Head of caudate nucleus (tissue), 42 donors: ENCODE measurements at regions of chr12 and their contacts with region 1.

Region 1: GRCh38 chr12:89542912-89543592 is 17.2 kb upstream of the POC1B start:
- DNase-seq: peak in 41 of 42 donors; percentile 27 to 89 (median 72)

Region 2: DNA sequence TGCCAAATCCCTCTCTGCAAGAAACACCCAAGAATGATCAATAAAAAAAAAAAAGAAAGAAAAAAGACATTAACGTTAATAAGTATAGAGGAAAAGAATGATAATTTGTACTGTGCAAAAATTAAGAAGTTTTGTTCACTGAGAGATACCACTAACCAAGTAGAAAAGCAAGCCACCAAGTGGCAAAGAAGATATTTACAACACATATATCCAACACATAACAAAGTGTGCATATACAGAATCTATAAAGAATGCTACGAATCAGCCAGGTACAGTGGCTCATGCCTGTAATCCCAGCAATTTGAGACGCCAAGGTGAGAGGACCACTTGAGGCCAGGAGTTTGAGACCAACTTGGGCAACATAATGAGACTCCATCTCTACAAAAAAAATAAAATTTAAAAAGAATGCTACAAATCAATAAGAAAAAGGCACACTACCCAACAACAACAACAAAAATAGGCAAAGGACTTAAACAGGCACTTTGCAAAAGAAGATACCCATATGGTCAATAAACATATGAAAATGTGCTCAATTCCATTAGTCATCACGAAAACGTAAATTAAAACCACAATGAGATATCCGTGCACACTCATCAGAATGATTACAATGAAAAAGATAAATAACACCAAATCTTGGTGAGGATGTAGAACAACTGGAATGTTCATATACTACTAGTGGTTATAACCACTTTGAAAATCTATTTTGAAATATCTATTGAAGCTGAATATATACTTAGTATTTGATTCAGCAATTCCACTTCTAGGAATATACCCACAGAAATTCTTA is 38.3 kb before region 1 on chr12:
- intact Hi-C with region 1: no loop called
- DNase-seq: no peak

Region 3: DNA sequence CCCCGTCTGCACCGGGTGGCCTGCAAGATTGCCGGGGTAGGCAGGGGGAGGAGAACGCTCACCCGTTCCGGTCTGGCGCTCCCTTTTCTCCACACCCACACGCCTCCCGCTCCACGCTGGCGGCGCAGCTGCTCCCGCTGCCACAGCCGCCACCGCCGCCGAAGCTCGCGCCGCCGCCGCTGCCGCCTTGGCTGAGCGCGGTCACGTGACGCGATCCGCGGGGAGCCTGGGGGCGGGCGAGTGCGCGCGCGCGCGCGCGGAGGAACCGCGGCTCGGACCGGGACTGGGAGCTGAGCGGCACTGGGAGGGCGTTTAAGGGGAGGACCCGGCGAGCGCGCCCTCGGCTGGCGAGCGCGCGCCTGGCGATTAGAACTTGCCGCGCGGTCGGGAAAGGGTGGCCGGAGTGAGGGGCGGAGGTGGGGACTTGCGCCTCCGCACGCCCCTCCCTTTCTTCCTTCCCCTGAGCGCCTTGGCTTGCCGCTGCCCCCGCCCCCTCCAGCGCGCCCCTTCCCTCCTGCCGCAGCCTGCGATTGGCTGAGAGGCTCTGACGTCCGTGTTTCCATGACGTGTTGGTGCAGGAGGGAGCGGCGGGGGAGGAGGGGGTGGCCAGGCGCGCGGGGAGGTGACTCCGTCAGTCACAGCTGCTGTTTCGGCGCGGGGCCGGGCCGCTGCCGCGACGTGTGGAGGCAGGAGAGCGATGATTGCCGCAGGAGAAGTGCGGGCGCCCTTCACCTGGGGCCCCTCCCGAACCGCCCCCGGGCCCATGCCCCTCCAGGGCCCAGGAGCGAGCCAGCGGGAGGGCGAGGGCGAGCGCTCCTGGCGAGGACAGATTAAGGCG is 166.3 kb after region 1 on chr12:
- intact Hi-C with region 1: loop called (anchors 5 kb)
- DNase-seq: peak; percentile 94 to 99 (median 98)

Region 4: GRCh38 chr12:90858252-90858651 is 1315.2 kb after region 1 on chr12:
- intact Hi-C with region 1: loop called (anchors 5 kb)
- DNase-seq: peak in 12 of 42 donors; percentile 2 to 39 (median 12)